Panc1 (cell line): ENCODE measurements at regions of chr12 and their contacts with region 1.

Region 1: DNA sequence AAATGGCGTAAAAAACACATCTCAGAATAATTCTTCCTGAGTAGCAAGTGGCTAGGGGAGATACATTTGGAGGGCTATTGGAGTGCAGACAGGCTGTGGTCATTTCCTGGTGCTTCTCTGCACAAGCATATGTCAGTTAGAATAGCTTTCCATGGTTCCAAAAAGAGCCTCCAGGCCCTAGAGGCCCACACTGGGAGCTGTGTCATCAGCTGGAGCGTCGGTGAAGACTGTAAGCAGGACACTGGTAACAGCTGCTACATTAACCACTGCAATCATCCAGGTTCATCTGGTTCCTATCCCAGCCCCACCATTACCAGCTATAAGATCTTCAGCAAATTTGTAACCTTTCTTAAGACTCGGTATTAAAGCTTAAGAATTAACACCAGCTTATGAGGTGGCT is 31.7 kb upstream of the APPL2 start:
- DNase-seq: no peak
- ATAC-seq: no peak
- H3K4me3 ChIP-seq: no peak overlapping the region
- H3K27ac ChIP-seq: no peak overlapping the region
- H3K4me1 ChIP-seq: no peaks in the 10 kb centered on the region
- H3K27me3 ChIP-seq: peaks cover 4% of the 10 kb centered on the region; the same call in 1 of the 2 replicates
- CTCF ChIP-seq: no peak

Region 2: DNA sequence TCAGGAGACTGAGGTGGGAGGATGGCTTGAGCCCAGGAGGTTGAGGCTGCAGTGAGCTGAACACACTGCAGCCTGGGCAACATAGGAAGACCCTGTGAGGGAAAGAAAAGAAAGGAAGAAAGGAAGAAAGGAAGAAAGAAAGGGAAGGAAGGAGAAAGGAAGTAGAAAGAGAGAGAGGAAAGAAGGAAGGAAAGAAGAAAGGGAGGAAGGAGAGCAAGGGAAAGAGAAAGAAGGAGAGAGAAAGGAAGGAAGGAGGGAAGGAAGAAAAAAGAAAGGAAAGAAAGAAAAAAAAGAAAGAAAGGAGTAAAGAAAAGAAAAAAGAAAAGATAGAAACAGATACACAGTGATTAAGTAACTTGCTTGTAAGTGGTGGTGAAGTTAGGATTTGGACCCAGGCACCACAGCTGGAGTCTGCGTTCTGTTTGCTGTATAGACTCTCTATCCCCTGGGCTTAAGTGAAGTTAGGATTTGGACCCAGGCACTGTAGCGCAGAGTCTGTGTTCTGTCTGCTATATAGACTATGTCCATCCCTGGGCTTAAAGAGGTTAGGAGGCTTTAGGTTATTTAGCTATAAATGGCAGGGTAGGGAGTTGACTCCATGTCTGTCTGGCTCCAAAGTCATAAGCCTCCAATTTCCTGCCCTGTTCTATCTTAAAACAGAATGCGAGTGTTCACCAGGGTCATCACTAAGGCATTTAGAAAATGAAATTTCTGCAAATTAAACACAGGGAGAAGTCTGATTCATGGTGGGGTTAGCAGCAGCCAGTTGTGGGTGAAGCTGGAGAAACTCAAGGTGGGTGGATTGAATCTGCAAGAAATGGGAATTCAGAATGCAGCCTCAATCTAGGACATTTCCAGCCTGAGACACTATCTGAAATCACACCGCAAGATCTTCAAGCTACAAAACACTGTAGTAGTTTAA is 49.5 kb after region 1 on chr12:
- CTCF ChIA-PET with region 1: no interaction called
- POLR2A ChIA-PET with region 1: interaction called, 11 read pairs
- in situ Hi-C with region 1: no loop called
- intact Hi-C with region 1: no loop called
- DNase-seq: no peak
- ATAC-seq: no peak
- H3K4me3 ChIP-seq: no peak overlapping the region
- H3K27ac ChIP-seq: no peak overlapping the region
- H3K4me1 ChIP-seq: no peaks in the 10 kb centered on the region
- H3K27me3 ChIP-seq: no peaks in the 10 kb centered on the region
- CTCF ChIP-seq: no peak

Region 3: DNA sequence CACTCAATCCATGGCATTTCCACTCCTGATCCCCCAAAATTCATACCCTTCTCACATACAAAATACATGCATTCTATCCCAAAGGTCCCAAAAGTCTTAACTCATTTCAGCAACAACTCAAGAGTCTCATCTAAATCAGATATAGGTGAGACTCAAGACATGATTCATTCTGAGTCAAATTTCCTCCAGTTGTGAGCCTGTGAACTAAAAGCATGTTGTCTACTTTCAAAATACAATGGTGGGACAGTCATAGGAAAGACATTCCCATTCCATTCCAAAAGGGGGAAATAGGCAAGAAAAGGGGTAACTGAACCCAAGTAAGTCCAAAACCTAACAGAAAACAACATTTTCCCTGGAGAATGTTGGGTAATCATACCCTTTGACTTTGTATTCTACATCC is 166.1 kb after region 1 on chr12:
- CTCF ChIA-PET with region 1: no interaction called
- POLR2A ChIA-PET with region 1: no interaction called
- in situ Hi-C with region 1: no loop called
- intact Hi-C with region 1: no loop called
- DNase-seq: no peak
- ATAC-seq: no peak
- H3K4me3 ChIP-seq: no peak overlapping the region
- H3K27ac ChIP-seq: no peak overlapping the region
- H3K4me1 ChIP-seq: no peaks in the 10 kb centered on the region
- H3K27me3 ChIP-seq: no peaks in the 10 kb centered on the region
- CTCF ChIP-seq: no peak